ENCODE measurements at regions of chr20 and their contacts with region 1.

Region 1: DNA sequence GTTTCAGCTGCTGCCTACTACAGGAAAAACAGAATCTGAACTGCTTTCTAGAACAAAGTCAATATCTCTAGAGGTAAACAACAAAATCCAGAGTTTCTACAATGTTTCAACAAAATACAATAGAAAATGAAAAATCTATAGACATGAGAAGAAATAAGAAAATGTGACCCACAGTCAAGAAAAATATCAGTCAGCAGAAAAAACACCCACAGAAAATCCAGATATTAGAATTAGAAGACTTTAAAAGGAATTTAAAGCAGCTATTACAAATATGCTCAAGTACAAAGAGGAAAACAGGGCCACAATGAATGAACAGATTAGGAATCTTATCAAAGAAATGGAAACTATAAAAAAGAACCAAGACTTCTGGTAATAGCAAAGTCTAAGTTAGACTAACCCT is 26.4 kb upstream of the ANKRD60 start:
- DNase-seq: no peak
- ATAC-seq: no peak
- H3K4me3 ChIP-seq: no peak overlapping the region
- H3K4me3 Mint-ChIP-seq: no peak overlapping the region
- H3K27ac ChIP-seq: no peak overlapping the region
- H3K27ac Mint-ChIP-seq: no peak overlapping the region
- H3K4me1 ChIP-seq: no peaks in the 10 kb centered on the region
- H3K4me1 Mint-ChIP-seq: peaks cover 11 to 14% (median 12%) of the 10 kb centered on the region in 3 donors
- H3K27me3 ChIP-seq: no peaks in the 10 kb centered on the region
- H3K27me3 Mint-ChIP-seq: no peaks in the 10 kb centered on the region

Region 2: GRCh38 chr20:58048169-58048568 is 206.7 kb before region 1 on chr20:
- CTCF ChIA-PET with region 1: no interaction called
- POLR2A ChIA-PET with region 1: no interaction called
- DNase-seq: no peak
- ATAC-seq: no peak
- H3K4me3 ChIP-seq: no peak overlapping the region
- H3K4me3 Mint-ChIP-seq: no peak overlapping the region
- H3K27ac ChIP-seq: no peak overlapping the region
- H3K27ac Mint-ChIP-seq: no peak overlapping the region
- H3K4me1 ChIP-seq: no peaks in the 10 kb centered on the region
- H3K4me1 Mint-ChIP-seq: no peaks in the 10 kb centered on the region
- H3K27me3 ChIP-seq: peaks cover 0 to 21% of the 10 kb centered on the region in 2 experiments
- H3K27me3 Mint-ChIP-seq: peaks cover 13 to 25% of the 10 kb centered on the region in 2 donors

Region 3: DNA sequence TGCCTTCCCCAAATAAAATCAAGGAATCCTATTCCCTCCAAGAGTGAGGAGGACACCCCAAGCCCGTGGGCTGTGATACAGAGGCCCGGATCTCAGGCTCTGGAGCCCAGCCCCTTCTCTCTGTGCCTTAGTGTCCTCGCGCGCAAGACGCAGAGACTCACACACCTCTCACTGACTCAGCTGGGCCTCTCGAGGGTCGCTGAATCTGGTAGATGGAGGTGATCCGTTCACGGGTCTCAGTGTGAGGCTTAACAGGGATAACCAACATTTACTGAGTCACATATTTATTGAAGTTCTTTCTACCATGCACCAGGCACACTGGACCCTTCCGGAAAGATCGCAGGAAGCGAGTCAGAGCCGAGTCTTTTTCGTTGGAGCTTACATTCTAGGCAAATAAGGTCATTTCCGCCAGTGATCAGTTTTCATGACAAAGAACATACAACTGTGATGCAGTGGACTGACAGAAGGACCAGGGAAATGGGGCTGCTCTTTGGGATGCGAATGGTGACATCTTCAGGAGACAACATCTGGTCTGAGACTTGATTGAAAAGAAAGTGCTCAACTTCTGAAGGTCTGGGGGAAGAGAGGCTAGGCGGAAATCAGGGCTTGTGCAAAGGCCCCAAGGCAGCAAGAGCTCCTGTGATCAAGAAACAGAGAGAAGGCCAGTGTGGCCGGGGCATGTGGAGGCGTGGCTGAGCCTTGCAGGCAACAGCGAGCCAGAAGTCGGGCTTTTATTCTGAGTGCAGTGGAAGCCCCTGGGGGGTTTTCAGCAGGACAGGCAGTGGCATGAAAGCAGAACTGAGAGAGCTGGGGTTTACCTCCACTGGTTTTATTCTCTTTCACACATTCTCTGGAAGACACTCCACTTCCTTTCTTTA is 203.5 kb after region 1 on chr20:
- CTCF ChIA-PET with region 1: no interaction called
- POLR2A ChIA-PET with region 1: interaction called in 1 of 2 experiments, 10 read pairs
- DNase-seq: no peak
- ATAC-seq: no peak
- H3K4me3 ChIP-seq: no peak overlapping the region
- H3K4me3 Mint-ChIP-seq: no peak overlapping the region
- H3K27ac ChIP-seq: no peak overlapping the region
- H3K27ac Mint-ChIP-seq: no peak overlapping the region
- H3K4me1 ChIP-seq: no peaks in the 10 kb centered on the region
- H3K4me1 Mint-ChIP-seq: peaks cover 0 to 4% (median 0%) of the 10 kb centered on the region in 3 donors
- H3K27me3 ChIP-seq: no peaks in the 10 kb centered on the region
- H3K27me3 Mint-ChIP-seq: no peaks in the 10 kb centered on the region

Measured in T-cell (primary cell).